Activated CD4-positive, alpha-beta T cell treated with anti-CD3 and anti-CD28 coated beads, Interleukin-2, amount 10 ng/mL, durations not matched to agents 24 days and 14 days (primary cell): ENCODE measurements at regions of chr5 and their contacts with region 1.

Region 1: GRCh38 chr5:137629646-137630045 is 106.2 kb downstream of the KLHL3 start:
- DNase-seq: peak; percentile 77
- H3K4me3 Mint-ChIP-seq: no peak overlapping the region
- H3K27ac Mint-ChIP-seq: no peak overlapping the region
- H3K4me1 Mint-ChIP-seq: no peaks in the 10 kb centered on the region
- H3K27me3 Mint-ChIP-seq: no peaks in the 10 kb centered on the region

Region 2: DNA sequence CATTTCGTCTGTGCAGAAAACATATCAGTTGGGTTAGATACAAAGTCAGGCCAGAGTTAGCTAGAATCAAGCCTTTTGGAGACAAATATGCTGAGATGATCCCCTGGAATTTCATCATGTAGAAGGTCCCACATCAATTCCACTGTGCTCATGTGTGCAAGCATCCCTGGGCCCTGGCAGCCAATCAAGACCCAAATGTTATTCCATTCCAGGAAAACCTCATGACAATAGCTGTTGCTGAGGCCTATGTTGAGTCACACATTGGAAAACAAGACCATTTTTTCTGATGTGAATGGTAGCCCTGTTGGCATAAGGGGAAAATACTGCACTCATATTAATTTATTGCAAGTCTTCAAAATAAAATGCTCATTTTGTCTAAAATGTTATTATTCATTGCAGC is 142.0 kb before region 1 on chr5:
- intact Hi-C with region 1: no loop called
- DNase-seq: no peak
- H3K4me3 Mint-ChIP-seq: no peak overlapping the region
- H3K27ac Mint-ChIP-seq: no peak overlapping the region
- H3K4me1 Mint-ChIP-seq: no peaks in the 10 kb centered on the region
- H3K27me3 Mint-ChIP-seq: no peaks in the 10 kb centered on the region

Region 3: GRCh38 chr5:137660349-137660817 is 30.7 kb after region 1 on chr5:
- intact Hi-C with region 1: loop called (anchors 1 kb)
- DNase-seq: peak; percentile 91
- H3K4me3 Mint-ChIP-seq: no peak overlapping the region
- H3K27ac Mint-ChIP-seq: no peak overlapping the region
- H3K4me1 Mint-ChIP-seq: peaks cover 3% of the 10 kb centered on the region
- H3K27me3 Mint-ChIP-seq: no peaks in the 10 kb centered on the region

Region 4: DNA sequence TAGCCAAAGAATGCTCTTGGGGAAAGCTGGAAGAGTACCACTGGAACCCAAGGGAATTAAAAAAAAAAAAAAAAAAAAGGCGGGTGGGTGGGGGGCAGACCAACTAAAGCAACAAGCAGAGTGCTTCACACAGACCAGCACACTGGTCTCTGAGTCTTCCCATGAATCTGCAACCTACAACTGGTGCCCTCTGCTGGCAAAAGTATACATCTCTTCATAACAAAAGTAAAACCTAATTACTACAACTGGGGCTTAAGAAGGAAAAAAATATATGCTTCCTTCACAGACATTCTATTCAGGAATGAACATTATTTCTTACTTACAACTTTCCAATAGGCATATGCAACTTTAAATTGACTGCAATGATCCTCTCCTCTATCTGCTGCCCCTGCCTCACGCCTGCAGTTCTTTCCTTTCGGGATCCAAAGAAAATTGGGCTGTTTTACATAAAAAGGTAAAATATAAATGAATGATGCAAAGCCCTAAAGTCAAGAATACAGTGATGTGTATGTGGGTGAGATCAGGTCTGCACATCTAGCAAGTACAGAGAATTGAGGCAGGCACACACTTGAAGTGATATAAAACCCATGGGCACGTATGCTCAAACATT is 113.5 kb after region 1 on chr5:
- intact Hi-C with region 1: loop called (anchors 1 kb)
- DNase-seq: peak; percentile 89
- H3K4me3 Mint-ChIP-seq: no peak overlapping the region
- H3K27ac Mint-ChIP-seq: no peak overlapping the region
- H3K4me1 Mint-ChIP-seq: peaks cover 6% of the 10 kb centered on the region
- H3K27me3 Mint-ChIP-seq: peaks cover 4% of the 10 kb centered on the region

Region 5: DNA sequence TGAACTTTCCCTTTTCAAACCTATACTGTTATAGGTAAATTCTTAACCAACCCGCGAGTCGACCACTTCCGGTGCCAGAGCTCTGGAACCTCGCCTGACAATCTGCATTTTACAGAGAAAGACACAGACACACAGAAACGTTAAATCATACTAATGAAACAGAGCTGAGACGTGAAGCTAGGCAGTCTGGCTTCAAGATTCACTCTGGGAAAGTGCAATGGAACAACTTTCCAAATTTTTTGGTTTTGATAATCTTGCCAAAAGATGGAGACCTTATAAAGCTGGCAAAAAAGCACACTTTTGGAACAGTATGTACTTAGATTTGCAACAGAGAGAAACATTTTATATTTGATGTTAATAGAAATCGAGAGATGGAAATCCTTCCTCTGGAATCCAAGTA is 438.3 kb after region 1 on chr5:
- intact Hi-C with region 1: loop called (anchors 1 kb)
- DNase-seq: no peak
- H3K4me3 Mint-ChIP-seq: no peak overlapping the region
- H3K27ac Mint-ChIP-seq: no peak overlapping the region
- H3K4me1 Mint-ChIP-seq: peaks cover 6% of the 10 kb centered on the region
- H3K27me3 Mint-ChIP-seq: no peaks in the 10 kb centered on the region

Region 6: DNA sequence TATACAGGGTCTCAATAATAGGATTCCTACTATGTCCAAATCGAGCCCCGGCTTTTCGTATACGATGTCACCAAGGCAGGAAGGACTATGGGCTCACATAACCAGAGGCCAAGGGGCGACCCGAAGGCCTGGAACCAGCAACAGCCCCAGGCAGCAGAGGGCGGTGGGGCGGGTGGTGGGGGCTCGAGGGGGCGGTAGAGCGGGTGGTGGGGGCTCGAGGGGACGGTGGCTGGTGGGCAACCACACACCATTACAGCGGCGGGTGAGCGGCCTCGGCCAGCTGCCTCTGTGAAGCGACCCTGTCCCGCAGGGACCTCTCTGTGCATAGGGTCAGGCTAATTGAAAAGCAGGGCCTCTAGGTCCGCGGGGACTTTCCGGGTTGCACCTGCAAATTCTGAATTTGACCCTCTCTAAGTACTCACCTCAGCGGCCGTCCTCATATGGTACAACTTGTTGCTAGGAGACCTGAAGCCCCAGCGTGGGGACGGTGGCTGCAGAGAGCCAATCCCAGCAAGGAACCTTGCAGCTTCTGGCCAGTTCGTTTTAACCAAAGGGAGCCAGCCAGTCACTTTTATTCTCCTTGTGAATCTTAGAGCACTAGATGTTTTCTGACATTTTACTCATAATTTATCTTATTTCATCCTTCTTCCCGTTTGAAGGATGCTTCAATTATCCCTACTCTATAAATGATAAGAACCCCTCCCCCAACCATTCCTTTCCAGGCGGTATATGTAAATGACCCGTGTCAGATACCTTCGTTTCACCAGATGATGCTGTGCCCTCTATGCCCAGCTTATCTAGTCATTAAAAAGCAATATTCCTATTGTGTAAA is 509.5 kb after region 1 on chr5 and contains the start of gene NME5:
- intact Hi-C with region 1: loop called (anchors 10 kb)
- DNase-seq: no peak
- H3K4me3 Mint-ChIP-seq: no peak within 1 kb of the TSS
- H3K27ac Mint-ChIP-seq: no peak within 1 kb of the TSS
- H3K4me1 Mint-ChIP-seq: no peaks in the 10 kb centered on the region
- H3K27me3 Mint-ChIP-seq: peaks cover 23% of the 10 kb centered on the region
- total RNA-seq, gene NME5: not detected in 2 replicates